ENCODE measurements at regions of chr12 and their contacts with region 1.

Region 1: GRCh38 chr12:123457980-123458783 is at the start of gene SNRNP35:
- DNase-seq: peak; percentile 73 to 93 (median 84)
- ATAC-seq: peak; percentile 77
- H3K4me3 ChIP-seq: peak within 1 kb of the TSS; percentile 93
- H3K4me3 Mint-ChIP-seq: peak within 1 kb of the TSS; percentile 100
- H3K27ac ChIP-seq: peak within 1 kb of the TSS; percentile 98 to 100
- H3K27ac Mint-ChIP-seq: peak within 1 kb of the TSS; percentile 100
- H3K4me1 ChIP-seq: peaks cover 38% of the 10 kb centered on the region
- H3K4me1 Mint-ChIP-seq: peaks cover 34% of the 10 kb centered on the region
- H3K27me3 ChIP-seq: no peaks in the 10 kb centered on the region
- H3K27me3 Mint-ChIP-seq: no peaks in the 10 kb centered on the region
- CTCF ChIP-seq: no peak
- total RNA-seq, gene SNRNP35: 26.2 to 28.6 TPM

Region 2: DNA sequence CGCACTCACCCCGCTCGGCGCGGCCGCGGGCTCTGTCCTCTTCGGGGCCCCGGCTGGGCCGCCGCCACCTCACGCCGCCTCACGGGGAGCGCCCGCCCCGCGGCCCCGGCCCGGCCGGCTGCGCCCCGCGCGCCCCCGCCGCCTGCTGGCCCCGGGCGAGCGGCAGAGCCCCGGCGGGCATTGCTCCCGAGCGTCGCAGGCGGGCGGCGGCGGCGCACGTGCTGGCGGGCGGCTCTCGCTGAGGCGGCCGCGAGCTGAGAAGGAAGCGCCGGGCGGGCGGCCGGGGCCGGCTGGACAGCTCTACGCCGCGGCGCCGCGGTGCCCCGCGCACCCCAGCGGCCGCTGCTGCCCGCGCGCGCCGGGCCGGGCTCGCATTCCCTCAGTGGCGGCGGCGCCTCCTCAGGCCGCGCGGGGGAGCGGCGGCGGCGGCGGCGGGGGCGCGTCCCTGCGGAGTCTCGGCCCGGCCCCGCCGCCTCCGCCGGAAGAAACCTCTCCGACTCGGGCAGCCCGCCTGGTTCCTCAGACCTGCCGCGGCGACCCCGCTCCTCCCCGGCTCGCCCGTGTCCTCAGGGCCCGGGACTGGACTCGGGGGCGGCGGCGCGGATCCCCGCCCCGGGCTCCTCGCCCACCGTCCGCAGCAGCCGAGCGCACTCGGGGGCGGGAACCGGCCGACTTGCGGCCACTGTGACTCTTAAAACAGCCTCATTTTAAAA is 307.3 kb before region 1 on chr12 and contains the start of gene PITPNM2:
- CTCF ChIA-PET with region 1: no interaction called
- POLR2A ChIA-PET with region 1: no interaction called
- intact Hi-C with region 1: no loop called
- DNase-seq: peak; percentile 28 to 87 (median 60)
- ATAC-seq: peak; percentile 86
- H3K4me3 ChIP-seq: peak within 1 kb of the TSS; percentile 76
- H3K4me3 Mint-ChIP-seq: peak within 1 kb of the TSS; percentile 93
- H3K27ac ChIP-seq: peak within 1 kb of the TSS; percentile 22 to 40
- H3K27ac Mint-ChIP-seq: peak within 1 kb of the TSS; percentile 89
- H3K4me1 ChIP-seq: peaks cover 27% of the 10 kb centered on the region
- H3K4me1 Mint-ChIP-seq: peaks cover 52% of the 10 kb centered on the region
- H3K27me3 ChIP-seq: no peaks in the 10 kb centered on the region
- H3K27me3 Mint-ChIP-seq: no peaks in the 10 kb centered on the region
- CTCF ChIP-seq: no peak
- total RNA-seq, gene PITPNM2: 37.3 to 38.3 TPM

Region 3: DNA sequence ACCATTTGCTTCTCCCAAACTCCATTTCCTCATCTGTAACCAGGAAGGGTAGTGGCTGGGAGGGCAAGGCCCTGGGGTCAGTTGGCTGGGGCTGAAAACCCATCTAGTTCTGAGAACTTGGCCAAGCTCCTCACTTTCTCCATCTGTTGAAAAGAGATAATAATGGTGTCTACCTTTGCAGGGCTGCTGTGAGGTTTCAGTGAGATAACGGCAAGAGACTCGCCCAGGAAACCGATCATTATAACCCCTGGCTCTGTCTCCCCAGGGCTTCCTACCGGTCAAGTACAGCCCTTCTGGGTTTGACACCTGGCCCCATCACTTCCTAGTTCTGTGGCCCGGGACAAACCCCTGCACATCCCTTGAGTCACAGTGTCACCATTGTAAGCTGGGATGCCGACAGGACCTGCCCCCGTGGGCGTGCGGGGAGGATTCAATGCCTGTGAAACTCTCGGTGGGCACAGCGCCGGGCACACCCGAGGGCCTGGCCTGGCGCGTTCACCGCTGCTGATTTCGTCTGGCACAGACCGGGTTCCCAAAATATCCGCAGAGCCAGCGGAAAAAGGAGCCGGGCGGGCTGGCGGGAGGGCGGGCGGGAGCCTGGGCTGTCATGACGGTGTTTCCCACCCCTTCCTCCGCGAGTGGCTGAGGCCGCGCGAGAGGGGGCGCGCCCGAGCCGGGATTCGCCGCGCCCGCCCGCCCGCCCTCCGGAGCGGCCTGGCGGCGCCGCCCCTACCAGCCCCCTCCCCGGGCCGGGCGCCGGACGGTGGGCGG is 69.8 kb before region 1 on chr12:
- CTCF ChIA-PET with region 1: interaction called, 4 read pairs
- POLR2A ChIA-PET with region 1: interaction called, 17 read pairs
- intact Hi-C with region 1: loop called (anchors 5 kb)
- DNase-seq: peak; percentile 34 to 88 (median 67)
- ATAC-seq: peak; percentile 61
- H3K4me3 ChIP-seq: peak overlapping the region; percentile 87
- H3K4me3 Mint-ChIP-seq: peak overlapping the region; percentile 91
- H3K27ac ChIP-seq: peak overlapping the region; percentile 53 to 76
- H3K27ac Mint-ChIP-seq: peak overlapping the region; percentile 73
- H3K4me1 ChIP-seq: peaks cover 58% of the 10 kb centered on the region
- H3K4me1 Mint-ChIP-seq: peaks cover 52% of the 10 kb centered on the region
- H3K27me3 ChIP-seq: no peaks in the 10 kb centered on the region
- H3K27me3 Mint-ChIP-seq: no peaks in the 10 kb centered on the region
- CTCF ChIP-seq: no peak

Region 4: DNA sequence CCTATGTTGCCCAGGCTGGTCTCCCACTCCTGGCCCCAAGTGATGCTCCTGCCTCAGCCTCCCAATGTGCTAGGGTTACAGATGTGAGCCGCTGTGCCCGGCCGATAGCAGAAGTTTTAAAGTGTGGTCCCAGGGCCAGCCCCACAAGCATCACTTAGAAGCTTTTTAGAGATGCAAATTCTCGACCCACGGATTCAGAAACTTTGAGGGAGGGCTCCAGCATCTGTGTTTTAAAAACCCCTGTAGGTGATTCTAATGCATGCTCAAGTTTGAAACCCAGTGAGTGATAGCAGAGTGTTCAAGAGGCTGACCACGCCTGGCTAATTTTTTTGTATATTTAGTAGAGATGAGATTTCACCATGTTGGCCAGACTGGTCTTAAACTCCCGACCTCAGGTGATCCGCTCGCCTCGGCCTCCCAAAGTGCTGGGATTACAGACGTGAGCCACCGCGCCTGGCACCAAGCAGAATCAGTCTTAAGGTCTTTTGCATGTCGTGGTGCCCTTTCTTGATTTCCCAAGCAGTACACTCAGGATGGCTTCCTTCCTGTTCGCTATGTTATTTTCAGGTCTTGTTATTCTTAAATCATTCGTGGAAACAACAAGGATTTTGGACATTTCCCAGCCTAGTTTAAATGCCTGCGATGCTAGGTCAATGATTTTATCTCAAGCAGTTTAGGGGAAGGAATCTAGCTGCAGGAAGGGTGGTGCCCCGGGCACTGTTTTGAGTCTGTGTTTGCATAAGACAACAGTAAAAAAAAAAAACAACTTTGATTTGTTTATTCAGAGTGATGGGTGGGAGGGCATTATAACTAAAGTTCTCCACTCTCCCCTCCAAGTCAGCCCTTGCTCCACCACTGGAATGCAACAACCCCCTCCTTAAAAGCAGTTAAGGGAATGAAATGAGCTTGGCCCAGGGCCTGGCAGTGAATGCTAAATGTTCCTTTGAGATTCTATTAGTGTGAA is 12.5 kb before region 1 on chr12:
- CTCF ChIA-PET with region 1: interaction called, 3 read pairs
- POLR2A ChIA-PET with region 1: interaction called, 60 read pairs
- intact Hi-C with region 1: no loop called
- DNase-seq: no peak
- ATAC-seq: no peak
- H3K4me3 ChIP-seq: no peak overlapping the region
- H3K4me3 Mint-ChIP-seq: peak overlapping the region; percentile 8
- H3K27ac ChIP-seq: peak overlapping the region in 1 of 2 donors; percentile 40
- H3K27ac Mint-ChIP-seq: peak overlapping the region; percentile 45
- H3K4me1 ChIP-seq: peaks cover 41% of the 10 kb centered on the region
- H3K4me1 Mint-ChIP-seq: peaks cover 34% of the 10 kb centered on the region
- H3K27me3 ChIP-seq: no peaks in the 10 kb centered on the region
- H3K27me3 Mint-ChIP-seq: no peaks in the 10 kb centered on the region
- CTCF ChIP-seq: no peak

Region 5: GRCh38 chr12:123533672-123534643 is 75.8 kb after region 1 on chr12 and contains the start of gene RILPL1:
- CTCF ChIA-PET with region 1: no interaction called
- POLR2A ChIA-PET with region 1: no interaction called
- intact Hi-C with region 1: loop called in 1 of 2 experiments (anchors 5 kb)
- DNase-seq: peak in 12 of 14 experiments; percentile 13 to 75 (median 36)
- ATAC-seq: peak; percentile 72
- H3K4me3 ChIP-seq: peak within 1 kb of the TSS; percentile 67
- H3K4me3 Mint-ChIP-seq: peak within 1 kb of the TSS; percentile 96
- H3K27ac ChIP-seq: no peak within 1 kb of the TSS
- H3K27ac Mint-ChIP-seq: peak within 1 kb of the TSS; percentile 50
- H3K4me1 ChIP-seq: peaks cover 23% of the 10 kb centered on the region
- H3K4me1 Mint-ChIP-seq: peaks cover 18% of the 10 kb centered on the region
- H3K27me3 ChIP-seq: no peaks in the 10 kb centered on the region
- H3K27me3 Mint-ChIP-seq: no peaks in the 10 kb centered on the region
- CTCF ChIP-seq: peak; percentile 28
- total RNA-seq, gene RILPL1: 3.3 to 3.4 TPM

Region 6: GRCh38 chr12:123601602-123602489 is 143.7 kb after region 1 on chr12 and contains the start of gene DDX55:
- CTCF ChIA-PET with region 1: no interaction called
- POLR2A ChIA-PET with region 1: interaction called, 10 read pairs
- intact Hi-C with region 1: loop called in 1 of 2 experiments (anchors 5 kb)
- DNase-seq: peak; percentile 78 to 95 (median 84)
- ATAC-seq: peak; percentile 93
- H3K4me3 ChIP-seq: peak within 1 kb of the TSS; percentile 98
- H3K4me3 Mint-ChIP-seq: peak within 1 kb of the TSS; percentile 98
- H3K27ac ChIP-seq: peak within 1 kb of the TSS; percentile 85 to 89
- H3K27ac Mint-ChIP-seq: peak within 1 kb of the TSS; percentile 76
- H3K4me1 ChIP-seq: peaks cover 27% of the 10 kb centered on the region
- H3K4me1 Mint-ChIP-seq: peaks cover 33% of the 10 kb centered on the region
- H3K27me3 ChIP-seq: no peaks in the 10 kb centered on the region
- H3K27me3 Mint-ChIP-seq: no peaks in the 10 kb centered on the region
- CTCF ChIP-seq: peak; percentile 54
- total RNA-seq, gene DDX55: 33.3 to 37.1 TPM

Region 7: GRCh38 chr12:123690191-123690840 is 232.1 kb after region 1 on chr12:
- CTCF ChIA-PET with region 1: no interaction called
- POLR2A ChIA-PET with region 1: no interaction called
- intact Hi-C with region 1: no loop called
- DNase-seq: no peak
- ATAC-seq: no peak
- H3K4me3 ChIP-seq: no peak overlapping the region
- H3K4me3 Mint-ChIP-seq: no peak overlapping the region
- H3K27ac ChIP-seq: no peak overlapping the region
- H3K27ac Mint-ChIP-seq: no peak overlapping the region
- H3K4me1 ChIP-seq: no peaks in the 10 kb centered on the region
- H3K4me1 Mint-ChIP-seq: no peaks in the 10 kb centered on the region
- H3K27me3 ChIP-seq: no peaks in the 10 kb centered on the region
- H3K27me3 Mint-ChIP-seq: no peaks in the 10 kb centered on the region
- CTCF ChIP-seq: no peak

Measured in CD4-positive, alpha-beta T cell (primary cell).